ENCODE measurements at regions of chr14 and their contacts with region 1.

Region 1: DNA sequence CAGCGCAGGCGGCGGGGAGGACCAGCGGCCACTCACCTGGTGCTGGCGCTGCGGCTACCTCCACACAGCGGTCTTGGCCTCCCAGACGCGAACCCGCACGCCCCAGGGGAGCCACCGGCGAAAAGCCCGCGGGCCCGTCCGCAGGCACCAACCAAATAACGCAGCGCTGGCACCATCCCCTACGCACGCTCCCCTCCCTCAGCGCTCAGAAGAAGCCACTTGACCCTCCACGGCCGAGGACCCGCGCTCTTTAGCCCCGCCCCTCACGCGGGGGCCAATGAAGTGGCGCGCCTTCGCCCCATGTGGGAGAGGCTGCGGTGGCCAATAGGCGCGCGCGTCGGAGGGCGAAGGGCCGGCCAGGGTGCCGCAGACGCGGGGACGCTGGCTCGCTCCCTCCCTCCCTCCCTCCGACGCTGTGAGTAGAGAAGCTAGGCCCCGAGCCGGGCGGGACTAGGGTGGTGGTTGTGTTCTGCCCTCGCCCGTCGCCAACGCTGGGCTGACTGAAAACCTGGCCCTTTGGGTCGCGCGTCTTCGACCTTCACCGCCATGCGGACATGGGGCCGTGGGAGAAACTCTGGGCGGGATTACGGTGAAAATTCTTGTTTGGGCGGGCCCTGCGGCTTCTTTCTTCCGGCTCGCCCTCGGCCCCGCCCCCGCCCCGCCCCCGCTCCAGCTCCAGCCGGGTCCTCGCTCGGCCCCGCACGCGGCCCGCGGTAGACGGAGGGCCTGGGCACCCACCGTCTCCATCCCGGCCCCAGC is at the starts of genes DMAC2L and L2HGDH:
- DNase-seq: peak; percentile 67 to 95 (median 87)
- ATAC-seq: peak; percentile 88
- H3K4me3 ChIP-seq: peak within 1 kb of the TSS; percentile 65 to 72
- H3K4me3 Mint-ChIP-seq: peak within 1 kb of the TSS; percentile 95
- H3K27ac ChIP-seq: peak within 1 kb of the TSS; percentile 74 to 93
- H3K27ac Mint-ChIP-seq: peak within 1 kb of the TSS; percentile 99
- H3K4me1 ChIP-seq: peaks cover 15% of the 10 kb centered on the region
- H3K4me1 Mint-ChIP-seq: peaks cover 41% of the 10 kb centered on the region
- H3K27me3 ChIP-seq: no peaks in the 10 kb centered on the region
- H3K27me3 Mint-ChIP-seq: no peaks in the 10 kb centered on the region
- CTCF ChIP-seq: no peak
- total RNA-seq, gene DMAC2L: 16.6 to 17.8 TPM
- total RNA-seq, gene L2HGDH: 2.6 to 3.0 TPM

Region 2: DNA sequence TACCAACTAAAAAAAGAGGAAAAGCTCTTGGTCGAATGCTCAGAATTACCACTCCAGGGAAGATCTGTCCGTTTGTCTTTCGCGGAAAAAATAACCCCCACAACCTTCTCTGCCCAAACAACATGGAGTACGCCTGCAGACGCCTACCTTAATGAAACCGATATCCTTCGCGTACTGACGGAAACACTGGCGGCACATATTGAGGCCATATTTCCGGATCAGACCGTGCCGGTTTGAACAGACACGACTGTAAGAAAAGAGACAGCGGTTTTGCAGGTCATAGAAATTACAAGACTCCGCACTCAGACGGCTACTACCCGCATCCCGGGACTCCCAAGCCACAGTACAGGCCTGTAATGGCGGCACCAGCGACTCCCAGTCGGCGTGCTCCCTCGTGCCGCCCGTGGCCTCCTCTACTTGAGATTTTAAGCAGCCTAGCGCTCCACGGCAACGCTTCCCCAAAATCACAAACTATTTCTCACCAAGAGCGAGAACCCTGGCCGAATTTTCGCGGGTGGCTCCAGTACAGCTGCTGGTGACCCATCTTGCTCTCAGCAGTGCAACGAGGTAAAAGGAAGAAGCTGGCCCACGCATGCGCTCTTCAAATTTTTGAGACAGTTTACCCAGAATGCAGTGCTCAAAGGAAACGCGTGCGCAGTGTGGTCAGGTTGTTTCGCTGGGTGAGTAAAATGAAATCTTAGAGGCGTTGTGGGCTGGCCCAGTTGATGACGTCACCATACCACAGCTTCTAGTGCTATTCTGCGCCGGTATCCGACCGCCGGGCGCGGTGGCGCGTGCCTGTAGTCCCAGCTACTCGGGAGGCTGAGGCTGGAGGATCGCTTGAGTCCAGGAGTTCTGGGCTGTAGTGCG is 726.1 kb before region 1 on chr14 and contains the start of gene RPS29:
- CTCF ChIA-PET with region 1: no interaction called
- POLR2A ChIA-PET with region 1: no interaction called
- intact Hi-C with region 1: loop called (anchors 5 to 10 kb)
- DNase-seq: peak; percentile 97 to 100 (median 98)
- ATAC-seq: peak; percentile 82
- H3K4me3 ChIP-seq: peak within 1 kb of the TSS; percentile 81 to 98
- H3K4me3 Mint-ChIP-seq: peak within 1 kb of the TSS; percentile 91
- H3K27ac ChIP-seq: peak within 1 kb of the TSS; percentile 97 to 98
- H3K27ac Mint-ChIP-seq: peak within 1 kb of the TSS; percentile 98
- H3K4me1 ChIP-seq: peaks cover 33% of the 10 kb centered on the region
- H3K4me1 Mint-ChIP-seq: peaks cover 48% of the 10 kb centered on the region
- H3K27me3 ChIP-seq: no peaks in the 10 kb centered on the region
- H3K27me3 Mint-ChIP-seq: no peaks in the 10 kb centered on the region
- CTCF ChIP-seq: no peak
- total RNA-seq, gene RPS29: 3,843 to 3,876 TPM

Region 3: DNA sequence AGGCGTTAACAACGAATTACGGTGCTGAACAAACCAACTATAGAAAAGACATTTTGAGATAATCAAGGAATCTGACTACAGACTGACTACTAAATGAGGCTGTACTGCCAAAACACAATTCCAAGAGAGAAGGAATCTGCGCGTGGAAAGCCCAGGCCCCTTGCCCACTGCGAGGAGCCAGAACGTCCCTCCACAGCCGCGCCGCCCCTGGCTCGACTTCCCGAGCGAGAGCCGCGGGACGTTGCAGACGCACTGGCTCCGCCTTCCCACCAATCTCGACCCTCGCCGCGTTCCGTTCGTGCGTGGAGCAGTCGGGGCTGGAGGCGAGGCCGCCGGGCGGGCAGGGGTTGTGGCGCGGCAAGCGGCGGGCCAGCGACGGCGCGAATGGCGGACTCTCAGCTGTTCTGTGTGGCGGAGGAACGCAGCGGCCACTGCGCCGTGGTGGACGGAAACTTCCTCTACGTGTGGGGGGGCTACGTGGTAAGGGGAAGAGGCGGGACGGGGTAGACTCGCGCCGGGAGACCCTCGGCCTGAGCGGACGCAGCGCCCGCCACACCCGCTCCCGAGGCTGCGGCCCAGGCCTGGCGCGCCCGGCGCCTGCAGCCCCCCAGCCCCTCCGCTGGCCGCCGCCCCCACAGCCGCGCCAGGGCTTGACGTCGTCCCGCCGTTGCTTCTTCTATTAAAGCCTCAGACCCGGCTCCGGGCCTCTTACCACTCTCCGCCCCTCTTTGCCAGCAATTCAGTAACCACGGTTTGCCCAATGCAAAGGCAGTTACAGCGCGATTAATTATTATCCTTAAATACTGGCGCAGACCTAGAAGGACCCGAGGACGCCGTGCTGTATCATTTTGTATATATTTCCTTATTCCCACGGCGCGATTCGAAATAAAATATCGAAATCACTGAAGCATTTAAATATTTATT is 619.1 kb before region 1 on chr14 and contains the start of gene KLHDC1:
- CTCF ChIA-PET with region 1: no interaction called
- POLR2A ChIA-PET with region 1: no interaction called
- intact Hi-C with region 1: loop called in 1 of 2 experiments (anchors 10 kb)
- DNase-seq: peak; percentile 56 to 90 (median 81)
- ATAC-seq: peak; percentile 84
- H3K4me3 ChIP-seq: peak within 1 kb of the TSS; percentile 49 to 63
- H3K4me3 Mint-ChIP-seq: peak within 1 kb of the TSS; percentile 78
- H3K27ac ChIP-seq: peak within 1 kb of the TSS; percentile 59 to 82
- H3K27ac Mint-ChIP-seq: peak within 1 kb of the TSS; percentile 90
- H3K4me1 ChIP-seq: peaks cover 15% of the 10 kb centered on the region
- H3K4me1 Mint-ChIP-seq: peaks cover 34% of the 10 kb centered on the region
- H3K27me3 ChIP-seq: no peaks in the 10 kb centered on the region
- H3K27me3 Mint-ChIP-seq: no peaks in the 10 kb centered on the region
- CTCF ChIP-seq: no peak
- total RNA-seq, gene KLHDC1: 8.5 to 11.0 TPM

Region 4: GRCh38 chr14:50045039-50045711 is 267.0 kb before region 1 on chr14:
- CTCF ChIA-PET with region 1: no interaction called
- POLR2A ChIA-PET with region 1: no interaction called
- intact Hi-C with region 1: no loop called
- DNase-seq: peak; percentile 27 to 86 (median 72)
- ATAC-seq: peak; percentile 77
- H3K4me3 ChIP-seq: peak overlapping the region in 1 of 2 experiments; percentile 17
- H3K4me3 Mint-ChIP-seq: peak overlapping the region; percentile 56
- H3K27ac ChIP-seq: peak overlapping the region; percentile 63 to 89
- H3K27ac Mint-ChIP-seq: peak overlapping the region; percentile 91
- H3K4me1 ChIP-seq: peaks cover 62% of the 10 kb centered on the region
- H3K4me1 Mint-ChIP-seq: peaks cover 65% of the 10 kb centered on the region
- H3K27me3 ChIP-seq: no peaks in the 10 kb centered on the region
- H3K27me3 Mint-ChIP-seq: no peaks in the 10 kb centered on the region
- CTCF ChIP-seq: no peak

Region 5: DNA sequence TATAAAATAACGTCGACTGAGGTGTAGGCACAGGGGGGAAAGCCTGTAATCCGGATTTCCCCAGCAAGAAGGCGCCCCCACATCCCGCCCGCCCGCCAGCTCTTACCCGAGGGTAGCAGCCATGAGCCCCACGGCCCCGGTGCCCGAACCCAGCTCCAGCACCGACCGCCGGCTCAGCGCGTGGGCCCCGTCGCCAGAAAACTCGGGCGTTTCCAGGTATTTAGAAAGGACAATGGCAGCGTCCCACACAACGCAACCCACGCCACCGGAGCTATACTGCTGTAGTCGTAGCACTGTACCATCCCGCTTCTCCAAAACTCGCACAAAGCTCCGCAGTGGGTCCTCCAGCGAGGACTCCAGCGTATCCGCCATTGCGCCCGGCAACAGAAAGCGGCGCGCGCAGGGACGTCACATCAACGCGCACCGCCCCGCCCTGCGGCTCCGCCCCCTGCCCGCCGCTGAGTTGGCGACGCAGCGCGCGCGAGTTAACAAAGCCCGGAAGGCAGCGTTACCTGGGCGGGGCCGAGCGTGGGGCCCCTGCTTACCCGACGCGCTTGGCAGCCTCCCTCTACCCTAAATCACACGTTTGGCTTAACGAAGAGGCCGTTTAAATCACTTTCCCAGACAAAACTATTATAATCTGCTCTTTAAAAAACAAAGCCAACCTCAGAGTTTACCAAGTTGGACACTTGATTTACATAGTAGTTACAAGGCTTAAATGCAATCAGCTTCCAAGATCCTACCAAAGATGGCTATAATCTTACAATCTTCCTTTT is 195.8 kb before region 1 on chr14 and contains the start of gene VCPKMT:
- CTCF ChIA-PET with region 1: no interaction called
- POLR2A ChIA-PET with region 1: interaction called, 3 read pairs
- intact Hi-C with region 1: loop called in 1 of 2 experiments (anchors 2 kb)
- DNase-seq: peak; percentile 91 to 98 (median 96)
- ATAC-seq: peak; percentile 97
- H3K4me3 ChIP-seq: peak within 1 kb of the TSS; percentile 69 to 92
- H3K4me3 Mint-ChIP-seq: peak within 1 kb of the TSS; percentile 98
- H3K27ac ChIP-seq: peak within 1 kb of the TSS; percentile 85 to 86
- H3K27ac Mint-ChIP-seq: peak within 1 kb of the TSS; percentile 99
- H3K4me1 ChIP-seq: peaks cover 20% of the 10 kb centered on the region
- H3K4me1 Mint-ChIP-seq: peaks cover 28% of the 10 kb centered on the region
- H3K27me3 ChIP-seq: no peaks in the 10 kb centered on the region
- H3K27me3 Mint-ChIP-seq: no peaks in the 10 kb centered on the region
- CTCF ChIP-seq: no peak
- total RNA-seq, gene VCPKMT: 38.2 to 39.6 TPM

Region 6: DNA sequence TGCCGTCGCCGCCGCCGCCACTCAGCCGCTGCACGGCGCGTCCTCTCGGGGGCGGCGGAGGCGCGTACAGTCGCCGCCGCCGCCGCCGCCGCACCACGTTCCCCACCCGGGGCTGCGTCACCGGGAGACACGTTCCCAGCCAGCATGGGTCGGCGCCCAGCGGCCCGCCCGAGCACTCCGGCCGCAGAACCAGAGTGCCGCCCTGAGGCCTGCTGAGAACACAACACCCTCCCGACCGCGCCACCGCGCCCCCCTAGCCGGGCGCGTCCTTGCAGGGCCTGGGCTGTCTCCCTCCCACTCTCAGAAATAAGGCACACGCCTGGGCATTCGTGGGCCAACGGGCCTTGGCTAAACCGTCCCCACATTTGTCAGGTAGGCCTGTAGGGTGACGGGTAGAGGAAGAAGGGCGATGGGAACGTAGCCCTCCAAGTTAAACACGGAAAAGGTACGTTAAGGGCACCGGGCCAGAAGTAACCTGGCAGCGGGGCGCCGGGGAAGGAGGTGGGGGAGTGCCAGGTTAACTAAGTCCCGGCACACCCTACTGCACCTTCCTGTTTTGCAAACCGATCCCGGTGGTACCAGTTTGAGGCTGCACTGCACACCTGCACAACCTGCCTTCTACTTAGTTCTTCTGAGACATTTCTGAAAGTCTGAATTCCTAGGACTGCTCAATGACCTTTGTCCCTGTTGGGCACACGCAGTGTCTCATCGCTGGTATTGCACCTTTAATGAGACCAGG is 220.5 kb after region 1 on chr14 and contains the start of gene MAP4K5:
- CTCF ChIA-PET with region 1: no interaction called
- POLR2A ChIA-PET with region 1: interaction called, 4 read pairs
- intact Hi-C with region 1: loop called in 1 of 2 experiments (anchors 1 kb)
- DNase-seq: peak; percentile 73 to 95 (median 88)
- ATAC-seq: peak; percentile 93
- H3K4me3 ChIP-seq: peak within 1 kb of the TSS; percentile 45 to 88
- H3K4me3 Mint-ChIP-seq: peak within 1 kb of the TSS; percentile 89
- H3K27ac ChIP-seq: peak within 1 kb of the TSS; percentile 47 to 70
- H3K27ac Mint-ChIP-seq: peak within 1 kb of the TSS; percentile 92
- H3K4me1 ChIP-seq: peaks cover 42% of the 10 kb centered on the region
- H3K4me1 Mint-ChIP-seq: peaks cover 49% of the 10 kb centered on the region
- H3K27me3 ChIP-seq: no peaks in the 10 kb centered on the region
- H3K27me3 Mint-ChIP-seq: no peaks in the 10 kb centered on the region
- CTCF ChIP-seq: peak; percentile 69
- total RNA-seq, gene MAP4K5: 32.0 to 32.7 TPM

Region 7: GRCh38 chr14:50785457-50786063 is 473.4 kb after region 1 on chr14:
- CTCF ChIA-PET with region 1: no interaction called
- POLR2A ChIA-PET with region 1: no interaction called
- intact Hi-C with region 1: loop called in 1 of 2 experiments (anchors 5 kb)
- DNase-seq: peak in 2 of 9 experiments; percentile 23 to 56
- ATAC-seq: peak; percentile 52
- H3K4me3 ChIP-seq: peak overlapping the region; percentile 3 to 32
- H3K4me3 Mint-ChIP-seq: peak overlapping the region; percentile 74
- H3K27ac ChIP-seq: peak overlapping the region; percentile 32 to 58
- H3K27ac Mint-ChIP-seq: peak overlapping the region; percentile 92
- H3K4me1 ChIP-seq: peaks cover 75% of the 10 kb centered on the region
- H3K4me1 Mint-ChIP-seq: peaks cover 96% of the 10 kb centered on the region
- H3K27me3 ChIP-seq: no peaks in the 10 kb centered on the region
- H3K27me3 Mint-ChIP-seq: no peaks in the 10 kb centered on the region
- CTCF ChIP-seq: no peak

Region 8: GRCh38 chr14:51651388-51652167 is 1339.4 kb after region 1 on chr14 and contains the start of gene FRMD6:
- CTCF ChIA-PET with region 1: no interaction called
- POLR2A ChIA-PET with region 1: no interaction called
- intact Hi-C with region 1: loop called in 1 of 2 experiments (anchors 10 kb)
- DNase-seq: peak; percentile 58 to 90 (median 76)
- ATAC-seq: peak; percentile 82
- H3K4me3 ChIP-seq: peak within 1 kb of the TSS; percentile 87 to 94
- H3K4me3 Mint-ChIP-seq: peak within 1 kb of the TSS; percentile 85
- H3K27ac ChIP-seq: peak within 1 kb of the TSS; percentile 55 to 73
- H3K27ac Mint-ChIP-seq: peak within 1 kb of the TSS; percentile 73
- H3K4me1 ChIP-seq: peaks cover 19% of the 10 kb centered on the region
- H3K4me1 Mint-ChIP-seq: peaks cover 17% of the 10 kb centered on the region
- H3K27me3 ChIP-seq: peaks cover 6 to 16% of the 10 kb centered on the region in 2 experiments
- H3K27me3 Mint-ChIP-seq: peaks cover 21% of the 10 kb centered on the region
- CTCF ChIP-seq: peak; percentile 70
- total RNA-seq, gene FRMD6: 2.4 to 3.5 TPM